Natural killer cell (primary cell): ENCODE measurements at regions of chr2 and their contacts with region 1.

Region 1: GRCh38 chr2:10043906-10044601 is 704 bp downstream of the KLF11 start:
- DNase-seq: peak; percentile 90 to 95
- ATAC-seq: peak; percentile 62 to 79 (median 63)
- H3K4me3 ChIP-seq: peak overlapping the region; percentile 43
- H3K4me3 Mint-ChIP-seq: peak overlapping the region; percentile 82
- H3K27ac ChIP-seq: peak overlapping the region; percentile 75
- H3K27ac Mint-ChIP-seq: peak overlapping the region; percentile 95 to 96
- H3K4me1 ChIP-seq: peaks cover 30% of the 10 kb centered on the region
- H3K4me1 Mint-ChIP-seq: peaks cover 14 to 46% of the 10 kb centered on the region in 2 donors
- H3K27me3 ChIP-seq: no peaks in the 10 kb centered on the region
- H3K27me3 Mint-ChIP-seq: no peaks in the 10 kb centered on the region
- CTCF ChIP-seq: no peak

Region 2: DNA sequence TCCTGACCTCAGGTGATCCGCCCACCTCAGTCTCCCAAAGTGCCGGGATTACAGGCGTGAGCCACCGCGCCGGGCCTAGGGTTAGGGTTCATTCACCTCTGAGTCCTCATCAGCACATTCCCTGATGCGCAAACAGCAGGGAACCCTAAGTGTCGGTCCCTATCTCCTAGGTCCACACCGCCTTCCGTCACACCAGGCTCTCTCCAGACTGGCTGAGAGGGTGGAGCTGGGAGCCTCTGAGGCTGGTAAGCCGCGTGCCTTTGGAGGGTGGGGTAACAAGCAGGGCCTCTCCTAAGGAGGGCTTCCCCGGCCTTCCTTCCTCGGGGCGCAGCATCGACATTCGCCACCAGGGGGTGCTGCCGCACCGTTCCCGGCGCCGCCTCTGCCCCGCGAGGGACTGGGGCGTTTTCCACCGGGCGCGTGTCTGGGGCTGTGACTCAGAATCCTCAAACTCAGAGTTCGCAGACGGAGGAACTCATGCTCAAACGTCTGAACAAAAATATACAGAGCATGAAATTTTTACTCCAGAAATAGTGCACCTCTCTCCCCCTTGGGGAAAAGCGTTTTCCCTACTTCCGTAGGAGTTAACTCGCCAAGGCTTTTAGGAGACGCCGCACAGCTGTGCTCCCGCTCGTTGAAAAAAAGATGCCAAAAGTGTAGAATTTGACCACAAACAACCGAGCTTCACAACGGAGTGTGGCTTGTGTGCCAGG is 901.3 kb before region 1 on chr2:
- intact Hi-C with region 1: loop called (anchors 5 kb)
- DNase-seq: peak; percentile 73 to 81
- ATAC-seq: peak; percentile 90 to 96 (median 95)
- H3K4me3 ChIP-seq: no peak overlapping the region
- H3K4me3 Mint-ChIP-seq: no peak overlapping the region
- H3K27ac ChIP-seq: no peak overlapping the region
- H3K27ac Mint-ChIP-seq: no peak overlapping the region
- H3K4me1 ChIP-seq: peaks cover 8% of the 10 kb centered on the region
- H3K4me1 Mint-ChIP-seq: peaks cover 0 to 5% of the 10 kb centered on the region in 2 donors
- H3K27me3 ChIP-seq: peaks cover 4% of the 10 kb centered on the region
- H3K27me3 Mint-ChIP-seq: peaks cover 12 to 27% of the 10 kb centered on the region in 2 donors
- CTCF ChIP-seq: peak; percentile 96

Region 3: DNA sequence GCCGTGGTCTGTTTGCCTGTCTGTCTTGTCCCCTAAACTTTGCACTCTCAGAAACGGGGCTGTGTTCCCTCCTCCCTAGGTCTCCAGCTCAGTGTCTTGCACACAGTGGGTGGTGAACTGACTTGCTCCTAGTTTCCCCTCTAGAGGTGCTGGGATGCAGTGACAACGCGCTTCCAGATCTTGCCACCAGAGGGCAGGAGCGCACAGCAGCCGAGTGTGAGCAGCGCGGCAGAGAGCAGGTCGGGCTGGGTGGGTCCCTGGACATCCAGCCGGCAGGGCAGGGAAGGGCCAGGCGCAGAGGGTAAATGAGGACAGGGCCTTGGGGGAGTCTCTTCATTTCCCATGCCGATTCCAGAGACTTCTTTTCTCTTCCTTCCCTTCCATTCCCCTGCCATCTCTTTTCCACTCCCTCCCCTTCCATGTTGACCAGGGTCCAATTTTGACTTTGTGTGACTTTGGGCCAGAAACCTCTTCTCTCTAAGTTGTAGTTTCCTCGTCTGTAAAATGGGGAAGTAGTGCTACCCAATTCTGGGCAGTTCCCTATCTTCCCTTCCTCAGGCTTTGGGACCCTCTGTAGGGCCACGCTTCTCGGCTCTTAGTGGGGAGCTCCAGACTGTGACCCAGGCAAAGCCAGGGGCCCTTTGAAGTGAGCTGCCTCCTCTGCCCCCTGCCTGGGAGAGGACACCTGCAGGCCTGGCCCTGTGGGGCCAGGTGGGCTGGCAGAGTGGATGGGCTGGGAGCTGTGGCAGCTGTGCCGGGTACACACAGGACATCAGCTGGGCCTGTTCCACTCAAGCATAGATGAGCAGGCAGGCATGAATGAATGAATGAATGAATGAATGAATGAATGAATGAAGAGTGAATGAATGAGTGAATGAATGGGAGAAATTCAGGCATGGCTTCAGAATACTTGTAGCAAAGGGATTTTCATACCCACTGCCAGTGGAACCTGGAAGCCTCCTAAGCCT is 244.1 kb before region 1 on chr2:
- intact Hi-C with region 1: loop called (anchors 1 kb)
- DNase-seq: peak; percentile 86 to 91
- ATAC-seq: peak; percentile 90 to 93 (median 91)
- H3K4me3 ChIP-seq: peak overlapping the region; percentile 25
- H3K4me3 Mint-ChIP-seq: peak overlapping the region; percentile 94
- H3K27ac ChIP-seq: peak overlapping the region; percentile 72
- H3K27ac Mint-ChIP-seq: peak overlapping the region; percentile 64 to 89
- H3K4me1 ChIP-seq: peaks cover 40% of the 10 kb centered on the region
- H3K4me1 Mint-ChIP-seq: peaks cover 30 to 36% of the 10 kb centered on the region in 2 donors
- H3K27me3 ChIP-seq: no peaks in the 10 kb centered on the region
- H3K27me3 Mint-ChIP-seq: peaks cover 0 to 2% of the 10 kb centered on the region in 2 donors
- CTCF ChIP-seq: peak; percentile 92

Region 4: GRCh38 chr2:9813312-9814133 is 230.5 kb before region 1 on chr2:
- intact Hi-C with region 1: loop called (anchors 1 kb)
- DNase-seq: peak; percentile 66 to 82
- ATAC-seq: peak; percentile 73 to 98 (median 95)
- H3K4me3 ChIP-seq: no peak overlapping the region
- H3K4me3 Mint-ChIP-seq: no peak overlapping the region
- H3K27ac ChIP-seq: no peak overlapping the region
- H3K27ac Mint-ChIP-seq: no peak overlapping the region
- H3K4me1 ChIP-seq: peaks cover 11% of the 10 kb centered on the region
- H3K4me1 Mint-ChIP-seq: peaks cover 10 to 20% of the 10 kb centered on the region in 2 donors
- H3K27me3 ChIP-seq: no peaks in the 10 kb centered on the region
- H3K27me3 Mint-ChIP-seq: peaks cover 0 to 9% of the 10 kb centered on the region in 2 donors
- CTCF ChIP-seq: peak; percentile 91

Region 5: DNA sequence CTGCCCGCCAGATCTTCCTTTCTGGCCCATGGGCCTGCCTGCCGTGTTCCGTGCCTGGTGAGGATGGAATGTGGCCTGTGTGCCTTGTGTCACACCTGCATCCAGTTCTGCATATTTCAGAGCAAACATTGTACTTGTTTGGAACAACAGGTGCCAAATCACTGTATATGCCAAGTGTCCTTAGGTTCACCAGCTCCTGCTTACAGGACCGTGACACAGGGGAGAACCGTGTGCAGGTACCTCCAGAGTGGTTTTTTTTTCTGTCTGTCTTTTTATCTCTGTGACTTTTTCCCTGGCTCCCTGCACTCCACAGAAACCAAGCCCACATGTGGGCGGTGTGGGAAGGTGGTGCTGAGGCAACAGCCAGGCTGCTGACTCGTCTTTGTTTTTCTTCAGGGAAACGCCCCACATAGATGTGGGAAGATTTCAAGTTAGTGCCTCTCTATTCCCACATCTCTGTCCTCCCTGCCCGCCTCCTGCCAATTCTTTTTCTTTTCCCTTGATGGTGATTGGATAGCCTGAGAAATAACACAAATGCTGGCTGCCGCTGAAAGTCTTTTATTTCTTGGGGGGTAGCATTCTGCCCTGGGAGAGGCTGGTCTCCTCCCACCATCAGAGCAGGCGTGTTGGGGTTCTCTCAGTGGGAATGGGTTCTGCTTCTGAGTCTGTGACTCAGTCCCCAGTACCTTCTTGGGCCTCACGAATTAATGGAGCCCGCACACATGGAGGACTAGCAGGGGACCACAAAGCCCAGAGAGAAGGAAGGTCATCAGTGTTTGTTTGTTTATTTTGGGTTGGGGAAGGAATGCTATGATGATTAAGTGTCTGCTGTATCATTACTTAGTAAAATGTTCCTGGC is 71.2 kb before region 1 on chr2:
- intact Hi-C with region 1: no loop called
- DNase-seq: no peak
- ATAC-seq: no peak
- H3K4me3 ChIP-seq: no peak overlapping the region
- H3K4me3 Mint-ChIP-seq: no peak overlapping the region
- H3K27ac ChIP-seq: no peak overlapping the region
- H3K27ac Mint-ChIP-seq: no peak overlapping the region
- H3K4me1 ChIP-seq: no peaks in the 10 kb centered on the region
- H3K4me1 Mint-ChIP-seq: peaks cover 0 to 4% of the 10 kb centered on the region in 2 donors
- H3K27me3 ChIP-seq: no peaks in the 10 kb centered on the region
- H3K27me3 Mint-ChIP-seq: peaks cover 0 to 2% of the 10 kb centered on the region in 2 donors
- CTCF ChIP-seq: no peak

Region 6: DNA sequence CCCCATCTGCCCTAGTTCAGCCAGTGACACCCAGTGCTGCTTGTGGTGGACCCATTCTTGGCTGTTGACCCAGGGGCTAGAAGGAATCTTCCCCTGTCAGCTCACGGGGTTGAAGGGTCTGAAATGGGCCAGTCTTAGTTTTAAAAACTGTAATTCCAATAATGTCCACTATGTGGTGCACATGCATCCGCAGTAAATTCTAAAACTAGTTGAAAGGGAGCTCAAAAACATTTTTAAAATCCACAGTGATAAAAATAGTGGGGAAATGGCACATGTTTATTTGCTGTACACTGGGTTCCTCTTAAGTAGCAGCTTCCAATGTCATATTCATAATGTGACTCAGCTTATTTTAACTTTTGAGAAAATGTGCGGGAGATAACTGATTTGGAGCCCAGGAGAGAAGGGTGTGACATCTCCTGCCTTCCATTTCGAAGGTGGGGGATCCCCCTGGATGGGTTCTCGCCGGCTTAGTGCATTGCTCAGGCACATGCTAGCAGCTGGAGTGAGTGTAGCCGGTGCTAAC is 59.8 kb before region 1 on chr2:
- intact Hi-C with region 1: loop called (anchors 1 kb)
- DNase-seq: peak in 1 of 2 donors; percentile 84
- ATAC-seq: peak; percentile 81 to 95 (median 89)
- H3K4me3 ChIP-seq: no peak overlapping the region
- H3K4me3 Mint-ChIP-seq: no peak overlapping the region
- H3K27ac ChIP-seq: no peak overlapping the region
- H3K27ac Mint-ChIP-seq: peak overlapping the region in 1 of 2 donors; percentile 29
- H3K4me1 ChIP-seq: peaks cover 6% of the 10 kb centered on the region
- H3K4me1 Mint-ChIP-seq: peaks cover 6 to 12% of the 10 kb centered on the region in 2 donors
- H3K27me3 ChIP-seq: no peaks in the 10 kb centered on the region
- H3K27me3 Mint-ChIP-seq: peaks cover 3 to 13% of the 10 kb centered on the region in 2 donors
- CTCF ChIP-seq: peak; percentile 80

Region 7: GRCh38 chr2:10009811-10010292 is 34.2 kb before region 1 on chr2:
- intact Hi-C with region 1: no loop called
- DNase-seq: no peak
- ATAC-seq: no peak
- H3K4me3 ChIP-seq: no peak overlapping the region
- H3K4me3 Mint-ChIP-seq: no peak overlapping the region
- H3K27ac ChIP-seq: no peak overlapping the region
- H3K27ac Mint-ChIP-seq: no peak overlapping the region
- H3K4me1 ChIP-seq: peaks cover 5% of the 10 kb centered on the region
- H3K4me1 Mint-ChIP-seq: peaks cover 0 to 12% of the 10 kb centered on the region in 2 donors
- H3K27me3 ChIP-seq: peaks cover 7% of the 10 kb centered on the region
- H3K27me3 Mint-ChIP-seq: peaks cover 0 to 5% of the 10 kb centered on the region in 2 donors
- CTCF ChIP-seq: no peak

Region 8: DNA sequence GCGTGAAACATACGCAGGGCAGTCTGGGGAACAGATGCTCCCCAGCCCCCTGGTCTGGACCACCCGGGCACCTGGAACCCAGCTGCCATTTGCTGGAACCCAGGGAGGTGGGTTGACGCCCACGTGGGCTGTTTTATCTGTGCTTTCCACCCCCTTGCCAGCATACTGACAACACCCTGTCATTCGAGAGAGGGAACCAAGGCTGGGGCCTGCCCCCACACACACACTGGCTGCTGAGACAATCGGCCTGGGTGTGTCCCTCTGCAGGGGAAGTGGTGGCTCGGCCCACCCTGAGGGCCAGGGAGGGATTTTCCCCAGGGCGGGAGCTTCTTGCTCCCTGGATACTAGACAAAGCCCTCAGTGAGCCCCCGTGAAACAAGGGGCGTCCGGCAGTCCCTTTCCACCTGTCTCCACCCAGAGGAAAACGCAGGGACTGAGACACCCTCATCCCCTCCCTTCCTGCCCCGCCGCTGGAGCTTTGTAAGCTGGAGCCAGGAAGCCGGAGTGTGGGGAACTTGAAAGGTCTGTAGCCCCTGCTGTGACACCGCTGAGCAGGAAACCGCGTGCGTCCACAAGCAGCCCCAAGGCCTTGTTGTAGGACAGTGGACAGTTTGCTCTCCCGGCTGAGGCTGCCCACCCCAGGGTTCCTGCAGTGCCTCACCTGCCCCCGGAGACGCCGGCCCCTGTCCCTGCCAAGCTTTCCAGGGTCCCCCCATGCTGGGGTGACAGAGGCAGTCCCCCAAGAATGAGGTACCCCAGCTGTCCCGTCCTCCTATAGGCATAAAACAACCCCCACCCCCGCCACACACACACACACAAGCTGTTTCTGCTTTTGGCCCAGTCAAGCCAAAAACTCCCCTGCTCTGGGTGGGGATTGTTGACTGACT is 14.8 kb before region 1 on chr2:
- intact Hi-C with region 1: loop called (anchors 1 kb)
- DNase-seq: peak; percentile 66 to 75
- ATAC-seq: peak; percentile 96 to 98 (median 97)
- H3K4me3 ChIP-seq: peak overlapping the region; percentile 21
- H3K4me3 Mint-ChIP-seq: peak overlapping the region; percentile 78
- H3K27ac ChIP-seq: peak overlapping the region; percentile 89
- H3K27ac Mint-ChIP-seq: peak overlapping the region; percentile 93 to 94
- H3K4me1 ChIP-seq: peaks cover 62% of the 10 kb centered on the region
- H3K4me1 Mint-ChIP-seq: peaks cover 26 to 42% of the 10 kb centered on the region in 2 donors
- H3K27me3 ChIP-seq: no peaks in the 10 kb centered on the region
- H3K27me3 Mint-ChIP-seq: no peaks in the 10 kb centered on the region
- CTCF ChIP-seq: no peak

Region 9: DNA sequence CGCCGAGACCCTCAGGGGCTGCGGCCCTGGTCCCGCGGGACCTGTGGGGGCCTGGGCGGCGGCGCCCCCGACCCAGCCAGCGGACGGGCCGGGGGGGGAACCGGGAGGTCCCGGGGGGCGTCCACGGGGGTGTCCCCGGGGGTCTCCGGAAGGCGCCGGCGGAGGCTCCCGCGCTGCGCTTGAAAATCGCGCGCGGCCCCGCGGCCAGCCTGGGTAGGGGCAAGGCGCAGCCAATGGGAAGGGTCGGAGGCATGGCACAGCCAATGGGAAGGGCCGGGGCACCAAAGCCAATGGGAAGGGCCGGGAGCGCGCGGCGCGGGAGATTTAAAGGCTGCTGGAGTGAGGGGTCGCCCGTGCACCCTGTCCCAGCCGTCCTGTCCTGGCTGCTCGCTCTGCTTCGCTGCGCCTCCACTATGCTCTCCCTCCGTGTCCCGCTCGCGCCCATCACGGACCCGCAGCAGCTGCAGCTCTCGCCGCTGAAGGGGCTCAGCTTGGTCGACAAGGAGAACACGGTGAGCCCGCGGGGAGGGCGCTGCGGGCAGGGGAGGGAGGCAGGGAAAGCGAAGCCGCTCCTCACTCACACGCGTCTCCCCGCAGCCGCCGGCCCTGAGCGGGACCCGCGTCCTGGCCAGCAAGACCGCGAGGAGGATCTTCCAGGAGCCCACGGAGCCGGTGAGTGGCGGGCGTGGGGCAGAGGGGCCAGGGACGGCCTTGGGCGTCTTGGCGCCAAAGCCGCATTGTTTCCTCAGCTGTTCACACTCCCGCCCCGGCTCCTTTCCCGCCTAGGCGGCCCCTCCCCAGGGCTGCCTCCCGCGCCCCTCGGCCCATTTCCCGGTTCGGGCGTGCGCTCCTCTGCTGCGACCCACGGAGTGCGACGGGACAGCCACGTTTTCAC is 78.6 kb after region 1 on chr2 and contains the start of gene RRM2:
- intact Hi-C with region 1: loop called (anchors 2 kb)
- DNase-seq: peak; percentile 86 to 93
- ATAC-seq: peak; percentile 73 to 87 (median 78)
- H3K4me3 ChIP-seq: peak within 1 kb of the TSS; percentile 44
- H3K4me3 Mint-ChIP-seq: peak within 1 kb of the TSS; percentile 97
- H3K27ac ChIP-seq: no peak within 1 kb of the TSS
- H3K27ac Mint-ChIP-seq: peak within 1 kb of the TSS; percentile 89 to 92
- H3K4me1 ChIP-seq: peaks cover 55% of the 10 kb centered on the region
- H3K4me1 Mint-ChIP-seq: peaks cover 50 to 54% of the 10 kb centered on the region in 2 donors
- H3K27me3 ChIP-seq: peaks cover 3% of the 10 kb centered on the region
- H3K27me3 Mint-ChIP-seq: no peaks in the 10 kb centered on the region
- CTCF ChIP-seq: no peak
- total RNA-seq, gene RRM2: 16.1 to 22.1 (median 18.5) TPM